ENCODE measurements at regions of chr5 and their contacts with region 1.

Region 1: DNA sequence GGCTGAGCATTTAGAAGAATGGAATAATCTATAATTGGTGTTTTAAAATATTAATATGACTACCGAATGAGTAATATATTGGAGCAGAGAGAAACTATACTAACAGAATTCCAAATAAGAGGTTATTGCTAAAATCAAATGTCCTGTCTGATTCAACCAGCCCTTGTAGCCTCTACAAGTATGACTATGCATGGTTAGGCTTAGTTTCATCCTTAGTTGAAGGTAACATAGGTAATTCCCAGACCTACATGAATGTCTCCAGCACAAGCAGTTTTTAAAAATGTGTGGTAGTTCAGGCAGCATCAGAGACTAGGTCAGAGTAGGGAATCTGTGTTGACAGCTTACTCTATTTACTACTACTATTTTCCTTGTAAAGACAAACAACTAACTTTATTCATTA is 51.7 kb upstream of the SLC27A6 start:
- DNase-seq: no peak
- H3K4me3 Mint-ChIP-seq: no peak overlapping the region
- H3K27ac Mint-ChIP-seq: no peak overlapping the region
- H3K4me1 Mint-ChIP-seq: no peaks in the 10 kb centered on the region
- H3K27me3 Mint-ChIP-seq: peaks cover 11% of the 10 kb centered on the region
- CTCF ChIP-seq: no peak

Region 2: DNA sequence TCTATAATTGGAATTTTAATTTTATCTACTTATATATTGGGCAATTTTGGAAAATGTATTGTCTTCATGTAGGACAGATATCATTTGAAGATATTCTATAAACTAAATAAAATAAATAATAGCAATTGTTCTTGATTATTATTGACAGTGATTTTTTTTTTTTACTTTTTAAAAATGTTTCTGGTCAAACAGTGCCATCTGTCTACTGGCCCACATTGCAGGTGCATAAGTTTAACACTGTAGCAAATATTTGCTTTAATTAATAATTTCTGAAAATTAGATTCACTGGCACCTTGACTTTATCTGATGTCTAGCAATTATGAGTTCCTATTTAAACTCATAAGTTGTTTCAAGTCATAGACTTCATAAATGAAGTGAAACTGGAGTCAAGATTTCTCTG is 139.9 kb after region 1 on chr5:
- CTCF ChIA-PET with region 1: no interaction called
- POLR2A ChIA-PET with region 1: no interaction called
- intact Hi-C with region 1: loop called (anchors 2 kb)
- DNase-seq: no peak
- H3K4me3 Mint-ChIP-seq: no peak overlapping the region
- H3K27ac Mint-ChIP-seq: no peak overlapping the region
- H3K4me1 Mint-ChIP-seq: peaks cover 7% of the 10 kb centered on the region
- H3K27me3 Mint-ChIP-seq: peaks cover 2% of the 10 kb centered on the region
- CTCF ChIP-seq: no peak